CD14-positive monocyte (primary cell): ENCODE measurements at regions of chr19 and their contacts with region 1.

Region 1: DNA sequence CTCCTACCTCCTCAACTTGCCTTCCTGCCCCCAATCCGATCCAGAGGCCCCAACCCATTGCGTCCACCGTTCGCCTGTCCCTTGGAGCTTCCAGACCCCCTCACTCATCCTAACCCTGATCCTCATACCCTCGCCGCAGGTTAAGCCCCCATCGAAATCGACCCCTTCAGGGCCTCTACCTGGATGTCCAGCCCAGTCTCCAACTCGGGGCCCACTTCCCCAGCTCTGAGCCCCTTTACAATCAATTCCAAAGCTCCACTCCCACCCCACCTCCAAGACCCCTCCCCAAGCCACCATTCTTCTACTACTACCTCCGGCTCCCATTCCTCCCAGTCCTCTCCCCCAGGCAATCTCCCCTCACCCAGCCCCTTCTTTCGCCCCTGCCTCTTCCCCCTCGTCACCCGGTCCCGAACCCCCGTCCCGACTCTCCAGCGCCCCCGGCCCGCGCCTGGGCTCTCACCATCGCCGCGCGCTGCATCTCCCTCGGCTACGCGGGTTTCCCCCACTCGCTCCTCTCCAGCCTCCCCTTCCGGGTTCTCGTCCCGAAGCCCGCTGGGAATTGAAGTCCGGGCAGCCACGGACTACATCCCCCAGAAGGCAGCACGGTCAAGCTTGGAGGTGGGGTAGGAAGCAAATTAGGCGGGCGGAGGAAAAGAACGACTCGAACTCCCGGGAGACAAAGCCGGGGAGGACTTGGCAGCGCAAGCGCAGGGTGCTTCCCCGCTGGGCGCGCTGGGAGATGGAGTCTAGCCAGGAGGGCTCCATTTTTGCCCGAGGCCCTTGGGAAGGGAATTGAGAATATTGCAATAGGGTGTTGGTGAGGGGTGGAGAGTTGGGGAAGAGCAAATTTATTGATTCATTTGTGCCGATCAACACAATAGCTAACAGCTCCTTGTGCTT is at the start of gene FBXO46:
- DNase-seq: peak; percentile 95 to 96 (median 95)
- H3K4me3 ChIP-seq: peak within 1 kb of the TSS; percentile 70 to 90 (median 72)
- H3K4me3 Mint-ChIP-seq: peak within 1 kb of the TSS; percentile 84 to 97
- H3K27ac ChIP-seq: peak within 1 kb of the TSS; percentile 11 to 90
- H3K27ac Mint-ChIP-seq: peak within 1 kb of the TSS; percentile 87 to 97 (median 93)
- H3K4me1 ChIP-seq: peaks cover 14 to 19% of the 10 kb centered on the region in 2 donors
- H3K4me1 Mint-ChIP-seq: peaks cover 22% of the 10 kb centered on the region
- H3K27me3 ChIP-seq: no peaks in the 10 kb centered on the region
- H3K27me3 Mint-ChIP-seq: peaks cover 0 to under 1% (median 0%) of the 10 kb centered on the region in 3 donors
- CTCF ChIP-seq: no peak
- polyA plus RNA-seq, gene FBXO46: 3.8 to 6.8 (median 5.5) TPM

Region 2: GRCh38 chr19:45692187-45693105 is 38.2 kb before region 1 on chr19 and contains the start of gene QPCTL:
- intact Hi-C with region 1: loop called in 1 of 2 experiments (anchors 2 kb)
- DNase-seq: peak; percentile 99
- H3K4me3 ChIP-seq: peak within 1 kb of the TSS; percentile 52 to 90 (median 79)
- H3K4me3 Mint-ChIP-seq: peak within 1 kb of the TSS; percentile 93 to 98
- H3K27ac ChIP-seq: peak within 1 kb of the TSS; percentile 87 to 97
- H3K27ac Mint-ChIP-seq: peak within 1 kb of the TSS; percentile 97 to 100 (median 100)
- H3K4me1 ChIP-seq: peaks cover 18 to 23% of the 10 kb centered on the region in 2 donors
- H3K4me1 Mint-ChIP-seq: peaks cover 23% of the 10 kb centered on the region
- H3K27me3 ChIP-seq: no peaks in the 10 kb centered on the region
- H3K27me3 Mint-ChIP-seq: peaks cover 0 to 6% (median 0%) of the 10 kb centered on the region in 3 donors
- CTCF ChIP-seq: no peak
- polyA plus RNA-seq, gene QPCTL: 0.46 to 3.0 (median 0.90) TPM

Region 3: DNA sequence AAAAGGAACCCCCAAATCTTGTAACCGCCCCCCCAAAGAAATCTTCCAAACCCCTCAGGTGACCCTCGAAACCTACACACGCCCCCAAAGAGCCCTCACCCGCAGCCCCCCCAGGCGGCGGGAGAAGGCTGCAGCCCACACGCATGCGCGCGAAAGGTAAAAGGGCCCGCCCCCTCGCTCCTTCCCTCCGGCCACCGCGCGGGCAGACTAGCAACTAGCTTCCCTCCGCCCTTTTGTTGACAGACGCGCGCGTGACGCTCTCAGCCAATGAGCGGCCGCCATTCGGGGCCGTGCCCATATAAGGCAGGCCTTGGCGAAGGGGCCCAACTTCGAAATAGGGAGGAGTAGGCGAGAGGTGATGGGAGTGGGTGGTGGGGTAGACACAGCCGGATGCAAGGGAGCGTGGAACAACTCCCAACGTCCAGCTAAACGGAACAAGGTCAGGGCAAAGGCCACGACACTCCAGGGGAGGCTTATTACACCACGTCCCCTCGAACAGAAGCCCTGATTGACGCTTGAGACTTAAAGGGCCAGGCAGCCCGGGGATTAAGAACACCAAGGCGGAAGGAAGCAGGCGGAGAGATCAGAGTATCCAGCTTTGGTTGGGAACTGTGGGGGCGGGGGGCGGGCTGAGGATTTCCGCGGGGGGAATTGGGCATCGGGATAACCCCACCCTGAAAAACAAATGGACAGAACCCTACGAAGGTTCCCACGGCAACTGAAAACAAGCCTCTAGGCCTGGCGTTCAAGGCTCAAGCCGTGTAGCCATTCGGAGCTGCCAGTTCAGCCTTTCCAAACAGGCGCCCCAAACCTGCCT is 13.3 kb before region 1 on chr19:
- intact Hi-C with region 1: loop called (anchors 2 kb)
- DNase-seq: peak; percentile 99
- H3K4me3 ChIP-seq: peak overlapping the region; percentile 45 to 90 (median 49)
- H3K4me3 Mint-ChIP-seq: peak overlapping the region; percentile 93 to 98
- H3K27ac ChIP-seq: peak overlapping the region; percentile 75 to 87
- H3K27ac Mint-ChIP-seq: peak overlapping the region; percentile 90 to 96 (median 93)
- H3K4me1 ChIP-seq: peaks cover 21 to 29% of the 10 kb centered on the region in 2 donors
- H3K4me1 Mint-ChIP-seq: peaks cover 38% of the 10 kb centered on the region
- H3K27me3 ChIP-seq: no peaks in the 10 kb centered on the region
- H3K27me3 Mint-ChIP-seq: peaks cover 0 to 3% (median 3%) of the 10 kb centered on the region in 3 donors
- CTCF ChIP-seq: no peak